CD4-positive, alpha-beta memory T cell (primary cell): ENCODE measurements at regions of chr6 and their contacts with region 1.

Region 1: GRCh38 chr6:26270903-26271667 is 93.9 kb upstream of the BTN3A2 start:
- DNase-seq: peak; percentile 84 to 87 (median 85)
- H3K4me3 ChIP-seq: peak overlapping the region; percentile 53 to 65
- H3K4me3 Mint-ChIP-seq: peak overlapping the region in 1 of 8 donors; percentile 85
- H3K27ac ChIP-seq: peak overlapping the region; percentile 83
- H3K27ac Mint-ChIP-seq: peak overlapping the region in 5 of 7 donors; percentile 68 to 97 (median 82)
- H3K4me1 ChIP-seq: peaks cover 31% of the 10 kb centered on the region
- H3K4me1 Mint-ChIP-seq: peaks cover 0 to 22% (median 15%) of the 10 kb centered on the region in 4 donors
- H3K27me3 ChIP-seq: no peaks in the 10 kb centered on the region
- H3K27me3 Mint-ChIP-seq: no peaks in the 10 kb centered on the region

Region 2: GRCh38 chr6:26103770-26104456 is 167.2 kb before region 1 on chr6:
- CTCF ChIA-PET with region 1: no interaction called
- POLR2A ChIA-PET with region 1: interaction called, 38 read pairs
- intact Hi-C with region 1: no loop called
- DNase-seq: peak; percentile 93 to 96 (median 94)
- H3K4me3 ChIP-seq: peak overlapping the region; percentile 36 to 39
- H3K4me3 Mint-ChIP-seq: peak overlapping the region; percentile 84 to 96 (median 92)
- H3K27ac ChIP-seq: peak overlapping the region; percentile 66
- H3K27ac Mint-ChIP-seq: peak overlapping the region; percentile 96 to 100 (median 99)
- H3K4me1 ChIP-seq: peaks cover 17% of the 10 kb centered on the region
- H3K4me1 Mint-ChIP-seq: peaks cover 11 to 19% (median 15%) of the 10 kb centered on the region in 4 donors
- H3K27me3 ChIP-seq: no peaks in the 10 kb centered on the region
- H3K27me3 Mint-ChIP-seq: peaks cover 2 to 6% of the 10 kb centered on the region in 2 donors

Region 3: DNA sequence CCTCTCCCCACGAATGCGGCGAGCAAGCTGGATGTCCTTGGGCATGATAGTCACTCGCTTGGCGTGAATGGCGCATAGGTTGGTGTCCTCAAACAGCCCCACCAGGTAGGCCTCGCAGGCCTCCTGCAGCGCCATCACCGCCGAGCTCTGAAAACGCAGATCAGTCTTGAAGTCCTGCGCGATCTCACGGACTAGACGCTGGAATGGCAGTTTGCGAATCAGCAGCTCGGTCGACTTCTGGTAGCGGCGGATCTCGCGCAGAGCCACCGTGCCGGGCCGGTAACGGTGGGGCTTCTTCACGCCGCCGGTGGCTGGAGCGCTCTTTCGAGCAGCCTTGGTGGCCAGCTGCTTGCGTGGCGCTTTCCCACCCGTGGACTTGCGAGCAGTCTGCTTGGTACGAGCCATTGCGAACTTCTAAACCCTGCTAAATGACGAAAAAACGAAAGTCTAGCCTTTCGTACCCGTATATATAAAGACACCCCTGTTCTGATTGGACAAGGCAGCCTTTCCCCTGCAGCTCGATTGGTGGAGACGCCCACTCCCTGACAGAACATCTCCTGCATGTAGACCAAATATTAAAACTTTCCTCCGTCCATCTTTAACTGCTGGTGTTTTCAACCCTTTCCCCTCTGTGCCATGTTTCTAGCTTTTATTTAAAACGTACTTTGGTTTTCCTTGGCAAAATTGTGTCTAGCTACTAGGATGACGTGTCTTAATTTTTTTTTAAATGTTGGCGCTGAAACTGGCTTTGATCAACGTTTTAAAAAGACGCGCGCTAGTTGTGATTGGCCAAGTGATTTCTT is 74.0 kb before region 1 on chr6:
- CTCF ChIA-PET with region 1: interaction called, 24 read pairs
- POLR2A ChIA-PET with region 1: interaction called, 362 read pairs
- intact Hi-C with region 1: no loop called
- DNase-seq: peak; percentile 92 to 93 (median 92)
- H3K4me3 ChIP-seq: peak overlapping the region; percentile 83 to 97
- H3K4me3 Mint-ChIP-seq: peak overlapping the region; percentile 94 to 99 (median 97)
- H3K27ac ChIP-seq: peak overlapping the region; percentile 84
- H3K27ac Mint-ChIP-seq: peak overlapping the region; percentile 96 to 100 (median 98)
- H3K4me1 ChIP-seq: peaks cover 43% of the 10 kb centered on the region
- H3K4me1 Mint-ChIP-seq: peaks cover 23 to 57% (median 41%) of the 10 kb centered on the region in 4 donors
- H3K27me3 ChIP-seq: no peaks in the 10 kb centered on the region
- H3K27me3 Mint-ChIP-seq: no peaks in the 10 kb centered on the region

Region 4: GRCh38 chr6:26240154-26241032 is 30.7 kb before region 1 on chr6:
- CTCF ChIA-PET with region 1: interaction called, 6 read pairs
- POLR2A ChIA-PET with region 1: interaction called, 330 read pairs
- intact Hi-C with region 1: loop called (anchors 1 kb)
- DNase-seq: peak; percentile 79 to 86 (median 82)
- H3K4me3 ChIP-seq: peak overlapping the region; percentile 66 to 67
- H3K4me3 Mint-ChIP-seq: peak overlapping the region; percentile 80 to 93 (median 87)
- H3K27ac ChIP-seq: peak overlapping the region; percentile 81
- H3K27ac Mint-ChIP-seq: peak overlapping the region; percentile 89 to 99 (median 95)
- H3K4me1 ChIP-seq: peaks cover 11% of the 10 kb centered on the region
- H3K4me1 Mint-ChIP-seq: peaks cover 9 to 29% (median 15%) of the 10 kb centered on the region in 4 donors
- H3K27me3 ChIP-seq: no peaks in the 10 kb centered on the region
- H3K27me3 Mint-ChIP-seq: no peaks in the 10 kb centered on the region

Region 5: GRCh38 chr6:26312501-26313390 is 41.7 kb after region 1 on chr6:
- CTCF ChIA-PET with region 1: no interaction called
- POLR2A ChIA-PET with region 1: interaction called, 15 read pairs
- intact Hi-C with region 1: loop called (anchors 1 kb)
- DNase-seq: peak; percentile 84 to 88 (median 85)
- H3K4me3 ChIP-seq: peak overlapping the region; percentile 31 to 73
- H3K4me3 Mint-ChIP-seq: peak overlapping the region; percentile 81 to 95 (median 92)
- H3K27ac ChIP-seq: peak overlapping the region; percentile 56
- H3K27ac Mint-ChIP-seq: peak overlapping the region; percentile 92 to 99 (median 96)
- H3K4me1 ChIP-seq: peaks cover 29% of the 10 kb centered on the region
- H3K4me1 Mint-ChIP-seq: peaks cover 29 to 54% (median 39%) of the 10 kb centered on the region in 4 donors
- H3K27me3 ChIP-seq: no peaks in the 10 kb centered on the region
- H3K27me3 Mint-ChIP-seq: peaks cover 0 to 8% of the 10 kb centered on the region in 2 donors

Region 6: GRCh38 chr6:27132532-27133280 is 861.6 kb after region 1 on chr6:
- CTCF ChIA-PET with region 1: no interaction called
- POLR2A ChIA-PET with region 1: interaction called, 42 read pairs
- intact Hi-C with region 1: loop called (anchors 1 kb)
- DNase-seq: peak; percentile 96 to 99 (median 98)
- H3K4me3 ChIP-seq: peak overlapping the region; percentile 72 to 90
- H3K4me3 Mint-ChIP-seq: no peak overlapping the region
- H3K27ac ChIP-seq: peak overlapping the region; percentile 93
- H3K27ac Mint-ChIP-seq: no peak overlapping the region
- H3K4me1 ChIP-seq: peaks cover 27% of the 10 kb centered on the region
- H3K4me1 Mint-ChIP-seq: peaks cover 0 to 24% (median 10%) of the 10 kb centered on the region in 4 donors
- H3K27me3 ChIP-seq: no peaks in the 10 kb centered on the region
- H3K27me3 Mint-ChIP-seq: no peaks in the 10 kb centered on the region